Activated naive CD4-positive, alpha-beta T cell treated with anti-CD3 and anti-CD28 coated beads for 36 hours (primary cell): ENCODE measurements at regions of chr1 and their contacts with region 1.

Region 1: DNA sequence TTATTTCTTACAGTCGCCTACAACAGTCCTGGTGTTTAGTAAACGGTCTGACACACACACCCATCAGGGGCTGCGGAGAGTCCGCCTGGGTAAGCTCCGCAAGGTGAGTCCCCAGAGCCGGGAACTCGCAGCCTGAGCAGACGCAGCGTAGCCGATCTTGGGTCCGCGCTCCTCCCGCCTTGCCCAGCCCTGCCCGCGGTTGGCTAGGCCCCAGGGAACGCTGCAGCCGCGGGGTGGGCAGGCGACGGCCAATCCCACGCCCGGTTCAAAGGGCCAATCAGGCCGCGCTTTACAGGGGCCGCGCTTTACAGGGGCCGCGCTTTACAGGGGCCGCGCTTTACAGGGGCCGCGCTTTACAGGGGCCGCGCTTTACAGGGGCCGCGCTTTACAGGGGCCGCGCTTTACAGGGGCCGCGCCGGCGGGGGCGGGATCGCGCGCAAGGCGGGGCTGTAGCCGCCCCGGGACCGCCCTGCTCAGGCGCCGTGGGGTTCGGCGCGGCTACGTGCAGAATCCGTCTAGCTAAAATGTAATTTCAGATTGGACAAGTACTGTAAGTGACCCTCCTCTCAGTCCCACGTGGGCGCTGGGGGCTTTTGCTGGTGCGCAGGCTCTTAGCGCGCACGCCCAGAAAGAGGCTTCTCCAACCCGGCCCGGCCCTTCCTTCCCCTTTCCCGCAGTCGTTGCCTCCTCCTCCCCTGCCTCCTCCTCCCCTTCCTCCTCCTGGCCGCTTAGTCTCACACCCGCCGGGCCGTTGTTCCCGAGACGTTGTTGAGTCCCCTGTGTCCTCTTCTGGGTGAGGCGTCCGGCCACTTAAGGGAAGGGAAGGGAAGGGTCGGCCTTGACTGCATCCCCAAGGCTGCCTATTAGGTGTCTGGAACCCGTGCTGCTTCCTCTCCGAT is at the start of gene FGGY:
- DNase-seq: peak; percentile 90
- H3K4me3 Mint-ChIP-seq: peak within 1 kb of the TSS; percentile 86
- H3K27ac Mint-ChIP-seq: peak within 1 kb of the TSS; percentile 79
- H3K4me1 Mint-ChIP-seq: peaks cover 16% of the 10 kb centered on the region
- H3K27me3 Mint-ChIP-seq: no peaks in the 10 kb centered on the region
- total RNA-seq, gene FGGY: 9.8 to 10.9 TPM

Region 2: GRCh38 chr1:58816072-58816746 is 480.4 kb before region 1 on chr1:
- CTCF ChIA-PET with region 1: no interaction called
- intact Hi-C with region 1: loop called (anchors 1 kb)
- DNase-seq: peak; percentile 90
- H3K4me3 Mint-ChIP-seq: peak overlapping the region; percentile 81
- H3K27ac Mint-ChIP-seq: peak overlapping the region; percentile 71
- H3K4me1 Mint-ChIP-seq: peaks cover 33% of the 10 kb centered on the region
- H3K27me3 Mint-ChIP-seq: no peaks in the 10 kb centered on the region

Region 3: GRCh38 chr1:59046730-59047157 is 249.9 kb before region 1 on chr1:
- CTCF ChIA-PET with region 1: no interaction called
- intact Hi-C with region 1: loop called (anchors 10 kb)
- DNase-seq: peak; percentile 79
- H3K4me3 Mint-ChIP-seq: peak overlapping the region; percentile 37
- H3K27ac Mint-ChIP-seq: peak overlapping the region; percentile 86
- H3K4me1 Mint-ChIP-seq: peaks cover 30% of the 10 kb centered on the region
- H3K27me3 Mint-ChIP-seq: no peaks in the 10 kb centered on the region

Region 4: DNA sequence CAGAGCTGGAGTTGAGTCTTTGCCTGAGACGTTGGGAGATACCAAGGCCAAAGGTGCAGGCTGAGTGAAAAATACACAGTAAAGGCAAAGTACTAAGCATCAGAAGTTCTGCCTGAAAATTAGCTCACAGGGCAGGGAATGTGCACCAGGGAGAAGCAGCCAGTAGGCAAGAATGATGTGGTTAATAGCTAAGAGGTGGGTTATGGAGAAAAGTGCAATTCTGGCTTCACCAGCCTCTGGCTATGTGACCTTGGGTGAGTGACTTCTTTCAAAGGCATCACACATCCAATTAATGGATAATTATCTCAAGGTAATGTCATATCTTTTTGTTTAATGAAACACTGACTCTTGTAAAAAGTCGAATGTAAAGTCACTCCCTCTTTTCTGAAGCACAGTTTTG is 230.4 kb before region 1 on chr1:
- CTCF ChIA-PET with region 1: no interaction called
- intact Hi-C with region 1: no loop called
- DNase-seq: no peak
- H3K4me3 Mint-ChIP-seq: no peak overlapping the region
- H3K27ac Mint-ChIP-seq: no peak overlapping the region
- H3K4me1 Mint-ChIP-seq: peaks cover 42% of the 10 kb centered on the region
- H3K27me3 Mint-ChIP-seq: no peaks in the 10 kb centered on the region

Region 5: GRCh38 chr1:59150577-59151391 is 145.8 kb before region 1 on chr1:
- CTCF ChIA-PET with region 1: no interaction called
- intact Hi-C with region 1: loop called (anchors 5 kb)
- DNase-seq: peak; percentile 42
- H3K4me3 Mint-ChIP-seq: no peak overlapping the region
- H3K27ac Mint-ChIP-seq: no peak overlapping the region
- H3K4me1 Mint-ChIP-seq: peaks cover 13% of the 10 kb centered on the region
- H3K27me3 Mint-ChIP-seq: no peaks in the 10 kb centered on the region

Region 6: GRCh38 chr1:59360729-59361128 is 64.1 kb after region 1 on chr1:
- CTCF ChIA-PET with region 1: no interaction called
- intact Hi-C with region 1: no loop called
- DNase-seq: no peak
- H3K4me3 Mint-ChIP-seq: no peak overlapping the region
- H3K27ac Mint-ChIP-seq: no peak overlapping the region
- H3K4me1 Mint-ChIP-seq: no peaks in the 10 kb centered on the region
- H3K27me3 Mint-ChIP-seq: no peaks in the 10 kb centered on the region

Region 7: DNA sequence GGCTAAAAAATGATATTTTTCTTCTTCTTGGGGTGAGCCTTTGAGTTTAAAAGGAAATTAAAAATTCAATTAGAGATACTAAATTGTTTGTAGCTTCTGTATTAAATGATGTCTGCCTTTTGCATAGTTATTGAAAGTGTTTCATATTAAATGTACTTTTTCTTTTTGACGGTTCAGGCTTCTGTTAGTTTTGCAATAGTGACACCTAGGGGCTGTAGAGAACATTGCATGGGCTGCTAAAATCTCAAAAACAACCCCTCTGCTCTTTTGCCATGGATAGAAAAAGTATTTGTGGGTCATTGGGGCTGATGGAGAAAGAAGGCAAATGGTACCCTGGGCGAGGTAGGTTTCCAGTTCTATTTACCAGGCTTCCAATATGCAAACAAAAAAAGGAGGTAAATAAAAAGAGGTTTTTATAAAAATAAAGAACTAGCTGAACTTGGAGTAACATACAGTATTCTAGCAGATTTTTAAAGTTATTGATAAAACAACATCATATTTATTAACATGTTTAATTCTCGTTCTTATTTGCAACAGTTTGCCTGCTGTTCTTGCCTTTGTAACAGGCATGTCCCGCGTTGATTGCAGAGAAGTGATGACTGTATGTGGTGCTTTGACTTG is 402.7 kb after region 1 on chr1:
- CTCF ChIA-PET with region 1: no interaction called
- intact Hi-C with region 1: loop called (anchors 5 kb)
- DNase-seq: peak; percentile 19
- H3K4me3 Mint-ChIP-seq: no peak overlapping the region
- H3K27ac Mint-ChIP-seq: no peak overlapping the region
- H3K4me1 Mint-ChIP-seq: peaks cover 15% of the 10 kb centered on the region
- H3K27me3 Mint-ChIP-seq: no peaks in the 10 kb centered on the region